CD4-positive, alpha-beta T cell (primary cell): ENCODE measurements at regions of chr17 and their contacts with region 1.

Region 1: GRCh38 chr17:50161023-50161910 is 4.5 kb upstream of the SGCA start:
- DNase-seq: peak; percentile 88 to 97 (median 93)
- ATAC-seq: peak; percentile 94
- H3K4me3 ChIP-seq: peak overlapping the region; percentile 76
- H3K4me3 Mint-ChIP-seq: peak overlapping the region; percentile 59
- H3K27ac ChIP-seq: no peak overlapping the region
- H3K27ac Mint-ChIP-seq: peak overlapping the region; percentile 70
- H3K4me1 ChIP-seq: peaks cover 36% of the 10 kb centered on the region
- H3K4me1 Mint-ChIP-seq: peaks cover 44% of the 10 kb centered on the region
- H3K27me3 ChIP-seq: no peaks in the 10 kb centered on the region
- H3K27me3 Mint-ChIP-seq: no peaks in the 10 kb centered on the region
- CTCF ChIP-seq: peak; percentile 93

Region 2: DNA sequence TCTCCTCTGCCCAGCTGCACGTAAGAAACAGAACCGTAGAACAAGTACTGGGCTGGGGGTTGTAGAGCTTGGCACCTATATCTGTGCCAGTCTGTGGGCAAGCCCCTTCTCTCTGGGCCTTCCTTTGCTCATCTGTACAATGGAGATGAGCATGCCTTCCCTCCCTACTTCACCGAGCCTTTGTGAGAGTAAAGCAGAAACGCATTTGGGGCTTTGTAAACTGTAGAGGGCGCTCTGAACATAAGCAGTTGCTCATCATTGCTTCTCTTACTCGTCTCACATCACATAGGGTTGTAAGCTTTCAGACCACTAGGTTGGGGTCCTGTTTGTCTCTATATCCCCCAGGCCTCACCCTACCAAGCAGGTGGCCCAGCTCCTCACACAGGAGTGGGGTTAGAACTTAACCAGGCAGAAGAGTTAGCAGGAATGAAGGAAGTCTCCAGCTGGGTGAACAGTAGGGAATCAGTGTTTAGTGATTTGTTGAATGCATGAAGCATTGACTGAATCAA is 46.4 kb before region 1 on chr17:
- CTCF ChIA-PET with region 1: interaction called, 8 read pairs
- POLR2A ChIA-PET with region 1: no interaction called
- intact Hi-C with region 1: loop called in 1 of 2 experiments (anchors 1 kb)
- DNase-seq: peak in 6 of 14 experiments; percentile 22 to 71 (median 50)
- ATAC-seq: peak; percentile 45
- H3K4me3 ChIP-seq: no peak overlapping the region
- H3K4me3 Mint-ChIP-seq: no peak overlapping the region
- H3K27ac ChIP-seq: no peak overlapping the region
- H3K27ac Mint-ChIP-seq: no peak overlapping the region
- H3K4me1 ChIP-seq: peaks cover 11% of the 10 kb centered on the region
- H3K4me1 Mint-ChIP-seq: peaks cover 13% of the 10 kb centered on the region
- H3K27me3 ChIP-seq: peaks cover 13 to 20% of the 10 kb centered on the region in 2 experiments
- H3K27me3 Mint-ChIP-seq: peaks cover 39% of the 10 kb centered on the region
- CTCF ChIP-seq: peak; percentile 33

Region 3: GRCh38 chr17:50129728-50130558 is 31.3 kb before region 1 on chr17 and contains the start of gene SAMD14:
- CTCF ChIA-PET with region 1: interaction called, 12 read pairs
- POLR2A ChIA-PET with region 1: interaction called, 3 read pairs
- intact Hi-C with region 1: loop called in 1 of 2 experiments (anchors 5 kb)
- DNase-seq: peak in 11 of 14 experiments; percentile 42 to 83 (median 55)
- ATAC-seq: peak; percentile 75
- H3K4me3 ChIP-seq: peak within 1 kb of the TSS; percentile 57
- H3K4me3 Mint-ChIP-seq: peak within 1 kb of the TSS; percentile 89
- H3K27ac ChIP-seq: no peak within 1 kb of the TSS
- H3K27ac Mint-ChIP-seq: peak within 1 kb of the TSS; percentile 81
- H3K4me1 ChIP-seq: peaks cover 35% of the 10 kb centered on the region
- H3K4me1 Mint-ChIP-seq: peaks cover 33% of the 10 kb centered on the region
- H3K27me3 ChIP-seq: peaks cover 10 to 13% of the 10 kb centered on the region in 2 experiments
- H3K27me3 Mint-ChIP-seq: peaks cover 27% of the 10 kb centered on the region
- CTCF ChIP-seq: no peak
- total RNA-seq, gene SAMD14: 0.33 to 0.53 TPM

Region 4: DNA sequence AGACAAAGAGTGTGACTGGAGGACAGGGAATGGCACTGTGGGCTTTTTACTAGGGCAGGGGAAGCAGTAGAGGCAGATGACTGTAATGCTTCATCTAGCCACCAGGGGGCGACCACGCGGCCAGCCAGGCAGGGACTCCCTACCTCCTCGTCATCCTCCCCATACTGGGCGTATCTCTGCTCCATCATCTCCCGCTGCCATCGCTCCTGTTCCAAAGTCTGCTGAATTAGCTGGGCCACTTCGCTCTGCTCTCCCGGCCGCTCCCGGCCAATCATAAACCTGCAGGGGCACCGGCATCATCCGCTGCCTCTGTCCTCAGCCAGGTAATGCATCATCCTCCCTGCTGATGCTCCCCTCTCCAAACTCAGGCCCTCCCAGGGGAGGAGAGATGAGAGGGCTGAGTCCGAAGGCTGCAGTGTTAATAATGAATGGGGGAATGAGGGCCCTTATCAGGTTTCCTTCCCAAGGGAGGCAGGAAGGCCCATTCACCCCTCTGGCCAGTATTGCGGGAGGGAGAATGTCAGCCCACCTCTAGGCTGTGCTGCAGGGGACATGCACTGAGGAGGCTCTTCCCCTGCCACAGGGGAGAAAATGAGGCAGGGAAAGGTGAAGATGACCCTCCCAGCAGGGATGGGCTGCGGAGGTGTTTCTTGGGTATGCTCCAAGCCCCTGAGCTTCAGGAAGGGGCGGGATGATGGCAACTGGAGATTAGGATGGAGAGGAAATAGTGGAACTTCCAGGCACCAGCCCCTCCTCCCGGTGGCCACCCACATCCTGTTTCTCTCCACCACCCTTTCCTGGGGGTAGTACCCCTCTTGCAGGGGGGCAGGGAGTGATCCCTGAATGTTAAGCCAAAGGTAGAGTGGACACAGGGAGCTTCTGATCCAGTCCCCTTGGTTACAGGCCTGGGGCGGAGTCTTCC is 21.1 kb before region 1 on chr17:
- CTCF ChIA-PET with region 1: interaction called, 16 read pairs
- POLR2A ChIA-PET with region 1: interaction called, 16 read pairs
- intact Hi-C with region 1: loop called (anchors 1 kb)
- DNase-seq: peak; percentile 71 to 89 (median 78)
- ATAC-seq: peak; percentile 91
- H3K4me3 ChIP-seq: peak overlapping the region; percentile 17
- H3K4me3 Mint-ChIP-seq: peak overlapping the region; percentile 57
- H3K27ac ChIP-seq: peak overlapping the region in 1 of 2 donors; percentile 49
- H3K27ac Mint-ChIP-seq: peak overlapping the region; percentile 76
- H3K4me1 ChIP-seq: peaks cover 79% of the 10 kb centered on the region
- H3K4me1 Mint-ChIP-seq: peaks cover 67% of the 10 kb centered on the region
- H3K27me3 ChIP-seq: no peaks in the 10 kb centered on the region
- H3K27me3 Mint-ChIP-seq: no peaks in the 10 kb centered on the region
- CTCF ChIP-seq: peak; percentile 94

Region 5: GRCh38 chr17:50206604-50207293 is 45.5 kb after region 1 on chr17:
- CTCF ChIA-PET with region 1: no interaction called
- POLR2A ChIA-PET with region 1: no interaction called
- intact Hi-C with region 1: no loop called
- DNase-seq: peak in 3 of 14 experiments; percentile 10 to 32 (median 21)
- ATAC-seq: peak; percentile 41
- H3K4me3 ChIP-seq: no peak overlapping the region
- H3K4me3 Mint-ChIP-seq: no peak overlapping the region
- H3K27ac ChIP-seq: no peak overlapping the region
- H3K27ac Mint-ChIP-seq: no peak overlapping the region
- H3K4me1 ChIP-seq: peaks cover 3% of the 10 kb centered on the region
- H3K4me1 Mint-ChIP-seq: peaks cover 9% of the 10 kb centered on the region
- H3K27me3 ChIP-seq: peaks cover 34 to 78% of the 10 kb centered on the region in 2 experiments
- H3K27me3 Mint-ChIP-seq: peaks cover 76% of the 10 kb centered on the region
- CTCF ChIP-seq: no peak